Activated naive CD4-positive, alpha-beta T cell treated with anti-CD3 and anti-CD28 coated beads for 36 hours (primary cell): ENCODE measurements at regions of chr5 and their contacts with region 1.

Region 1: GRCh38 chr5:80125962-80126480 is 90.9 kb downstream of the THBS4 start:
- DNase-seq: peak; percentile 44
- H3K4me3 Mint-ChIP-seq: no peak overlapping the region
- H3K27ac Mint-ChIP-seq: peak overlapping the region; percentile 43
- H3K4me1 Mint-ChIP-seq: peaks cover 47% of the 10 kb centered on the region
- H3K27me3 Mint-ChIP-seq: no peaks in the 10 kb centered on the region

Region 2: GRCh38 chr5:80077051-80077714 is 48.8 kb before region 1 on chr5:
- CTCF ChIA-PET with region 1: no interaction called
- intact Hi-C with region 1: no loop called
- DNase-seq: no peak
- H3K4me3 Mint-ChIP-seq: no peak overlapping the region
- H3K27ac Mint-ChIP-seq: no peak overlapping the region
- H3K4me1 Mint-ChIP-seq: no peaks in the 10 kb centered on the region
- H3K27me3 Mint-ChIP-seq: no peaks in the 10 kb centered on the region

Region 3: GRCh38 chr5:80141147-80141671 is 15.2 kb after region 1 on chr5:
- CTCF ChIA-PET with region 1: interaction called, 5 read pairs
- intact Hi-C with region 1: loop called (anchors 1 kb)
- DNase-seq: no peak
- H3K4me3 Mint-ChIP-seq: no peak overlapping the region
- H3K27ac Mint-ChIP-seq: peak overlapping the region; percentile 84
- H3K4me1 Mint-ChIP-seq: peaks cover 69% of the 10 kb centered on the region
- H3K27me3 Mint-ChIP-seq: no peaks in the 10 kb centered on the region

Region 4: GRCh38 chr5:80153586-80154126 is 27.6 kb after region 1 on chr5:
- CTCF ChIA-PET with region 1: no interaction called
- intact Hi-C with region 1: loop called (anchors 1 kb)
- DNase-seq: no peak
- H3K4me3 Mint-ChIP-seq: no peak overlapping the region
- H3K27ac Mint-ChIP-seq: peak overlapping the region; percentile 86
- H3K4me1 Mint-ChIP-seq: peaks cover 53% of the 10 kb centered on the region
- H3K27me3 Mint-ChIP-seq: no peaks in the 10 kb centered on the region

Region 5: DNA sequence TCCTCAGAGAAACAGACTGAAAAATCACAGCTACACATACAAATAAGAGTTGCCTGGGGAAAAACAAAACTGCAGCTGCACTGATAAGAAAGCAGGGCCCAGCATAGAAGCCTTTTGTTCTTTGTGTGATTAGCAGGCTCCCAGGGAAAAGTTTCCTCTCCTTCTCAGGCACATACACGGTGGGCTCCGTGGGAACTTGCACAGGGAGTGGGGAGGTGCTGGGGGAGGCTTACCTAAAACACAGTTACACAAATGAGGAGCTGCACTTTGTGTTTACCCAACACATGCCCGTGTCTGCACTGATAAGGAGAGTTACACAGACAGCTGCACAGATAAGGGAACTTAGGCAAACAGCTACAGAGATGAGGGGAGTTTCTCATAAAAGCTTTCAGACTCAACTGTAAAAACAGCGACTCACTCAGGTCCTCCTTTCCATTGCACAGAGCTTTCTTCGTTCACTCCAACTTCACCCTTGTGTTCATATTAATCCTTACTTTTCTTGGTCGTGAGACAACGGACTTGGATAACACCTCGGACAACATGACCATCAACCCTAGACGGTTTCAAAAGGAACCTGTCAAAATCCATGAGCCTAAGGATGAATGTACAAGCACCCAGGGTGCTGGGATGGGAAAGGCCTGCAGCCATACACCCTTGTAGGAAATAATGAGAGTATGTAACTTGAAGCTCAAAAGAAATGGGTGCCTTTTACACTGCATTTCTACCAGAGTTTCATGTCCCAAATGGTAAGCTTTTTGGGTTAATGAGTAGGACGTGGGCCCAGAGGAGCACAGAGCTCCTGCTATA is 79.0 kb after region 1 on chr5:
- CTCF ChIA-PET with region 1: interaction called, 3 read pairs
- intact Hi-C with region 1: loop called (anchors 1 kb)
- DNase-seq: peak; percentile 46
- H3K4me3 Mint-ChIP-seq: no peak overlapping the region
- H3K27ac Mint-ChIP-seq: peak overlapping the region; percentile 88
- H3K4me1 Mint-ChIP-seq: peaks cover 82% of the 10 kb centered on the region
- H3K27me3 Mint-ChIP-seq: no peaks in the 10 kb centered on the region